Psoas muscle (tissue), 8 donors: ENCODE measurements at regions of chr10 and their contacts with region 1.

Region 1: DNA sequence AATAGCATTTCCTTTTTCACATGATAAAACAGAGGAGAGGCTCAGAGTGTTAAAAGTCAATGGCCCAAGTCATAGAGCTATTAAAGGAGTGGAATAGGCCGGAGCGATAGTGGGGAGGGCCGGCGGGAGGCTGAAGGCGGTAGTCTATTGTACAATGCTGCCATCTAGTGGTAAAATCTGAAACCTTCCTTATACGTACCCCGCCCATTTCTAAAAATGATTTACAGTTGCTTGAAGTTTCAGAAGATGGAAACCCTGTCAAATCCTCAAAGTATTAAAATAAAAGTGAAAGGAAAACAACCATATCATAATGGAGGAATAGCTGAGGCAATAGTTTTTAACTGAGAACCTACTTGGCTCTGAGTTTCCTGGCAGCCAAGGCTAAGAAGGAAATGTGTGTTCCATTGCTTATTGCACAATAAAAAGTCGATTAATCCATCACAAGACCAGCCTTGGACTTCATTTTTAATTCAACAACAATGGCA is 209.1 kb downstream of the CCSER2 start:
- DNase-seq: peak; percentile 53 to 66
- ATAC-seq: peak; percentile 84 to 94 (median 92)
- H3K4me3 ChIP-seq: no peak overlapping the region
- H3K27ac ChIP-seq: no peak overlapping the region
- H3K4me1 ChIP-seq: peaks cover 4% of the 10 kb centered on the region
- H3K27me3 ChIP-seq: peaks cover 0 to 24% (median 0%) of the 10 kb centered on the region in 3 donors
- CTCF ChIP-seq: peak; percentile 91

Region 2: DNA sequence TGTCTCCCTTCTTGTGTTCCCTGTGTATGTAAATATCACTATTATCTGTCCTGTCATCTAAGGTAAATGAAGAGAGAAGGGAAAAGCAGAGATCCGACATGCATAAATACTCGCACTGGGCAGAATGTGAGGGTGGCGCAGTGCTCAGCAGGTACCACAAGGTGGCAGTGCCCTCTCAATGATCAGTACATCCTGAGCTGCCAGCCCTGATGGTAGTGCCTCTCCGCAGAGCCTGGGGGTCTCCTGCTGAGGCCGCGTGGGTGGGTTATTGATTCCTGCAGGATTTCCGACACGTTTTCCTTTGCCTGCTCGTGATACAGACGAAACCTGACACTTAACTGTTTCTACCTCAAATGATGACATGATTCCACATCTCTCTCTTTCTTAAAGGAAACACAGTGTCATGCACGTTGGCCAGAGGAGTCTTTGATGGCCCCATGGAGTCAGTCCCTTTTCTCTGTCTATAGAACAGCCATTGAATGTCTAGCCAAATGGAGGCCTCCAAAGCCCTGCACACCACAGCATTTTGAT is 272.8 kb before region 1 on chr10:
- intact Hi-C with region 1: loop called (anchors 1 to 2 kb)
- DNase-seq: peak; percentile 52 to 73
- ATAC-seq: peak; percentile 89 to 94 (median 92)
- H3K4me3 ChIP-seq: no peak overlapping the region
- H3K27ac ChIP-seq: no peak overlapping the region
- H3K4me1 ChIP-seq: no peaks in the 10 kb centered on the region
- H3K27me3 ChIP-seq: peaks cover 0 to 4% (median 3%) of the 10 kb centered on the region in 3 donors
- CTCF ChIP-seq: peak; percentile 96

Region 3: GRCh38 chr10:84375011-84375410 is 162.5 kb before region 1 on chr10:
- intact Hi-C with region 1: loop called (anchors 2 kb)
- DNase-seq: no peak
- ATAC-seq: peak in 2 of 4 donors; percentile 64 to 81
- H3K4me3 ChIP-seq: no peak overlapping the region
- H3K27ac ChIP-seq: no peak overlapping the region
- H3K4me1 ChIP-seq: no peaks in the 10 kb centered on the region
- H3K27me3 ChIP-seq: no peaks in the 10 kb centered on the region
- CTCF ChIP-seq: peak; percentile 80

Region 4: GRCh38 chr10:84429926-84430520 is 107.5 kb before region 1 on chr10:
- intact Hi-C with region 1: loop called in 1 of 2 experiments (anchors 10 kb)
- DNase-seq: peak; percentile 34 to 59
- ATAC-seq: peak; percentile 34 to 79 (median 74)
- H3K4me3 ChIP-seq: no peak overlapping the region
- H3K27ac ChIP-seq: no peak overlapping the region
- H3K4me1 ChIP-seq: peaks cover 77% of the 10 kb centered on the region
- H3K27me3 ChIP-seq: no peaks in the 10 kb centered on the region
- CTCF ChIP-seq: peak; percentile 64

Region 5: DNA sequence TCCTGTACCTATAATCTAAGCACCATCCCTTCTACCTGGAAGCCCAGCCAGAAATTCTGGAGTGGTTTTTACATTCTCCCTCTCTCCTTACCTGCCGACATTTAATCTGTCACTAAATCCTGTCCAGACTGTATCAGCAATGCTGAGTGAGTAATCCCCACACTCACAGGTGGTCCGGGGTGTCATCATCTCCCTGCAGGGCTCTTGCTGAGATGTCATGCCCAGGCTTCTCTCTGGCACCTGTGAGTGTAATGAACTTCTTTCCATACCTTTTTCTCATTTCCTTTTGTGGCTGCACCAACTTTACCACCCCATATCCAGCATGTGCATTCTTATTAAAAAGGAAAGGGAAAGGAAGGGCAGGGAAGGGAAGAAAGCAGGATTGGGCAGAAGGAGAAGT is 146.1 kb after region 1 on chr10:
- intact Hi-C with region 1: no loop called
- DNase-seq: no peak
- ATAC-seq: no peak
- H3K4me3 ChIP-seq: no peak overlapping the region
- H3K27ac ChIP-seq: no peak overlapping the region
- H3K4me1 ChIP-seq: no peaks in the 10 kb centered on the region
- H3K27me3 ChIP-seq: no peaks in the 10 kb centered on the region
- CTCF ChIP-seq: no peak

Region 6: GRCh38 chr10:85618841-85619240 is 1081.4 kb after region 1 on chr10:
- intact Hi-C with region 1: no loop called
- DNase-seq: no peak
- ATAC-seq: no peak
- H3K4me3 ChIP-seq: no peak overlapping the region
- H3K27ac ChIP-seq: no peak overlapping the region
- H3K4me1 ChIP-seq: no peaks in the 10 kb centered on the region
- H3K27me3 ChIP-seq: no peaks in the 10 kb centered on the region
- CTCF ChIP-seq: no peak

Region 7: DNA sequence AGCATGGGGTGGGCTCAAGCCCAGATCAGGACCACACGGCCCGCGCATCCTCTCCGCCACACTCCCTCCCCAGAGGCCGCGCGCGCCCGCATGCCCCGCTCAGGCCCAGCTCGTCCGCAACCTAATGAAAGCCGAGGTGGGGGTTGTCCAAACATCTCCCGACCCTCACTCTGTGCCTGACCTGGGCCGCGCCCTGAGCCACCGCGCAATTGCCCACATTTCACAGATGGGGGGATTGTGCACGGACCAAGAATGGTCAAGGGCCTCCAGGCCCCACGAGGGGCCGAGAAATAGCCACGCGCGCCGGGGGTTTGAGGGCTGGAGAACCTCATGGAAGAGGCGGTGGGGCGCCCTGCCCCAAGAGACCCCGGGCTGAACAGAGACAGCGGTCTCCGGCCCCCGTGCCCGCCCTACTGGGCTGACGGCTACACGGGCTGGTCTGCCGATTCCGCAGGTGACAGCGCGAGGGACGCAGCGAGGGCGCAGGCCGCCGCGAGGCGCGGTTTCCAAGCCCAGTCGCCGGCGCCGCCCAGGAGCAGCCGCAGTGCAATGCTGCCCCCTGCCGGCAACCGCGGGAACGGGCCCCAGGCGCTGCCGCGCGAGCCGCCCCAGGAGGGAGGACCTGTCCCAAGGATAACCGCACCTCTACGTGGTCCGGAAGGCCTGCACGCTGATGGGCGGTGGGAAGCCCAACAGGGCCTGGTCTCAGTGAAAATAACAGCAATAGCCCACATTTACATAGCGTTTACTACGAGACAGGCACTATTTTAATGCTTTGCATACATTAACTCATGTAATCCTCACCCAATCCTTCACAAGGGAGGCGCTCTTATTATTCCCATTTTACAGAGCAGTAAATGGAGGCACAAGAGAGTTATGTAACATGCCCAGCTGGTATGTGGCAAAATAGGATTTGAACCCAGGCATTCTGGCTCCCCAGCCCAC is 1839.6 kb after region 1 on chr10:
- intact Hi-C with region 1: loop called (anchors 5 kb)
- DNase-seq: peak; percentile 72 to 84
- ATAC-seq: peak; percentile 95 to 99 (median 96)
- H3K4me3 ChIP-seq: peak overlapping the region; percentile 52
- H3K27ac ChIP-seq: no peak overlapping the region
- H3K4me1 ChIP-seq: peaks cover 3% of the 10 kb centered on the region
- H3K27me3 ChIP-seq: peaks cover 0 to 37% (median 3%) of the 10 kb centered on the region in 3 donors
- CTCF ChIP-seq: peak; percentile 100